AG04450 (cell line): ENCODE measurements at regions of chr1 and their contacts with region 1.

Region 1: DNA sequence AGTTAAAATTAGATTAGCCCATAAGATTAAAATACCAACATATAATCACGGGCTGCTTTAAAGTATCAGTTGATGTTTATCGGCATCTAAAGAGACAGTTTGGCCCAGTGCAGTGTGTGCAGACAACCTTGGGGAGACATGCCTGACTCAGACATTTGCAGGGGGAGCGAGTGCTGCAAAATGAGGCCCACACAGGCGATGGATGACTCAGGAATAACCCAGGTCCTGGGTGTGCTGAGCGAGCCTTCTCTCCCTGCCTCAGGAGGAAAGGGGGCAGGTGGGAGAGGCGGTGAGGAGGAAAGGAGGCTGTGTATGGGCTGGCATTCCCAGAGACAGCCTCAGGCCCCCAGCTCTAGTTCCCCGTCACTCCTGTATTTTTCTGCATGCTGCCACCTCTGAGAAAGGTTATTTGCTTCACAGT is 9.0 kb downstream of the SLC9A1 start:
- DNase-seq: peak; percentile 61
- H3K4me3 ChIP-seq: no peak overlapping the region
- H3K27ac ChIP-seq: peak overlapping the region; percentile 84
- H3K27me3 ChIP-seq: no peaks in the 10 kb centered on the region
- CTCF ChIP-seq: no peak

Region 2: GRCh38 chr1:27111626-27112573 is 34.0 kb before region 1 on chr1:
- CTCF ChIA-PET with region 1: interaction called, 7 read pairs
- POLR2A ChIA-PET with region 1: interaction called, 11 read pairs
- DNase-seq: peak; percentile 99
- H3K4me3 ChIP-seq: no peak overlapping the region
- H3K27ac ChIP-seq: peak overlapping the region; percentile 90
- H3K27me3 ChIP-seq: no peaks in the 10 kb centered on the region
- CTCF ChIP-seq: peak; percentile 38